Endothelial cell of umbilical vein (primary cell): ENCODE measurements at regions of chr14 and their contacts with region 1.

Region 1: GRCh38 chr14:49867831-49868723 is 15.5 kb upstream of the NEMF start:
- DNase-seq: peak; percentile 95
- H3K4me3 ChIP-seq: peak overlapping the region; percentile 43 to 69 (median 50)
- H3K27ac ChIP-seq: peak overlapping the region; percentile 64
- H3K4me1 ChIP-seq: peaks cover 17% of the 10 kb centered on the region
- H3K27me3 ChIP-seq: no peaks in the 10 kb centered on the region
- CTCF ChIP-seq: no peak
- POLR2A ChIP-seq: peak; percentile 87

Region 2: GRCh38 chr14:49879683-49880204 is 11.7 kb after region 1 on chr14:
- CTCF ChIA-PET with region 1: interaction called, 13 read pairs
- POLR2A ChIA-PET with region 1: no interaction called
- dilution Hi-C with region 1: no loop called
- intact Hi-C with region 1: no loop called
- DNase-seq: peak; percentile 66
- H3K4me3 ChIP-seq: no peak overlapping the region
- H3K27ac ChIP-seq: no peak overlapping the region
- H3K4me1 ChIP-seq: no peaks in the 10 kb centered on the region
- H3K27me3 ChIP-seq: no peaks in the 10 kb centered on the region
- CTCF ChIP-seq: peak; percentile 72 to 73
- POLR2A ChIP-seq: no peak

Region 3: DNA sequence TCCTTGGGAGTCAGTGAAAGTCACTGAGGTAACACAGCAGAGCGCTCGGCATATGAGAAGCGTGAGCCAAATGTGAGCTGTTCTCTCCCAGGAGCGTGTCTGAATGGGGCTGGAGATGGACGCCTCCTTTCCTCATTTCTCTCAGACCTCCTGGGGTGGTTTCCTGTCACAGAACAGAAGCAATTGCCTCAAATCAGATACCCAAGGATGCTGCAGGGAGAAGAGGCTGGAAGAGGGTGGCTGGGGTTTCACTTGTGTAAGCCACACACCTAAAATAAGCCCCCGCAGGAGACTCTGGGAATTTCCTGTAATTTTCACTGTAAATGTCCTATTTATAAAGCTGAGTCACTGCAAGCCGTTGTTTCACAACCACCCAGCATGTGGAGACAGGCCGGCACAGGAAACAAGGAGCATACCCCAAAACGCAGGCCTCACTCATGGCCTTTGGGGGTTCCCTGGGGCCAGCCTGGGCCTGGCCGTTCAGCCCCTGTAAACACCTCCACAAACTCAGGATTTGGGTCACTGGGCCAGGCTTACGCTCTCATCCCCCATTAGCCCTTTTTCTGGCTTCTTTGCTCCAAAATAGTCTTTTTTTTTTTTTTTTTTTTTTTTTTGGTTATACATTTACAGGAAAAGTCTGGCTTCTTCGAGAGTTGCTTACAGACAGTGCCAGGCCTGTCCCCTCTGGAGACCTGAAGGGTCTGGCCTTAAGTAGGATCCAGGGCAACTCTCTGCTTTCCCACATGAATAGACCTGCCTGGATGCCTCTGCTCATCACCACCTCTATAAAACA is 193.0 kb after region 1 on chr14:
- CTCF ChIA-PET with region 1: interaction called, 25 read pairs
- POLR2A ChIA-PET with region 1: no interaction called
- dilution Hi-C with region 1: no loop called
- intact Hi-C with region 1: loop called (anchors 1 kb)
- DNase-seq: peak; percentile 82
- H3K4me3 ChIP-seq: no peak overlapping the region
- H3K27ac ChIP-seq: peak overlapping the region; percentile 88
- H3K4me1 ChIP-seq: peaks cover 31% of the 10 kb centered on the region
- H3K27me3 ChIP-seq: no peaks in the 10 kb centered on the region
- CTCF ChIP-seq: peak in 1 of 2 donors; percentile 4
- POLR2A ChIP-seq: no peak

Region 4: DNA sequence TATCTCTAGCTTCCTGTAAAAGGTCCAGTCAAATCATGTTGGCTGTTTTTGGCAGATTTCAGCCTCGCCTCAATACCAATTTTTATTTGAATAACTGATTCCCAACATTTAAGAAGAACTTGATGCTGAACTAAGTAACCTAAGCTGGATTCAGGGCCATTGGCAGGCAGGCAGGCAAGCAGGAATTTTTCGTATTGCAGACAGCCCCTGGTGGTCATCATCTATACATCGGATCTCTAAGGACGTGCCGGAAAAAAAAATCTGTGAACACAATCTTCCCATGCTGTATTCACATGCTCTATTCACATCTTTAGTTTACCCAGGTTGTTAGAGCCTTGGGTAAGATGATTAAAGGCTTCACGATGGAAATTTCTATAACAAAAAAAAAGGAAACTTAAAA is 241.3 kb after region 1 on chr14:
- CTCF ChIA-PET with region 1: interaction called, 242 read pairs
- POLR2A ChIA-PET with region 1: interaction called, 7 read pairs
- dilution Hi-C with region 1: loop called (anchors 10 kb)
- intact Hi-C with region 1: loop called (anchors 1 kb)
- DNase-seq: peak; percentile 11
- H3K4me3 ChIP-seq: no peak overlapping the region
- H3K27ac ChIP-seq: no peak overlapping the region
- H3K4me1 ChIP-seq: no peaks in the 10 kb centered on the region
- H3K27me3 ChIP-seq: no peaks in the 10 kb centered on the region
- CTCF ChIP-seq: peak in 1 of 2 donors; percentile 23
- POLR2A ChIP-seq: no peak

Region 5: GRCh38 chr14:50311975-50312733 is 444.1 kb after region 1 on chr14 and contains the starts of genes DMAC2L and L2HGDH:
- CTCF ChIA-PET with region 1: interaction called, 4 read pairs
- POLR2A ChIA-PET with region 1: no interaction called
- dilution Hi-C with region 1: no loop called
- intact Hi-C with region 1: loop called (anchors 2 kb)
- DNase-seq: peak; percentile 95
- H3K4me3 ChIP-seq: peak within 1 kb of the TSS; percentile 64 to 83 (median 79)
- H3K27ac ChIP-seq: peak within 1 kb of the TSS; percentile 66
- H3K4me1 ChIP-seq: peaks cover 15% of the 10 kb centered on the region
- H3K27me3 ChIP-seq: no peaks in the 10 kb centered on the region
- CTCF ChIP-seq: peak in 1 of 2 donors; percentile 60
- POLR2A ChIP-seq: peak; percentile 91
- total RNA-seq, gene DMAC2L: 7.9 and 13.9 TPM in 2 replicates
- total RNA-seq, gene L2HGDH: 5.3 and 5.4 TPM in 2 replicates